AG04450 (cell line): ENCODE measurements at regions of chr22 and their contacts with region 1.

Region 1: DNA sequence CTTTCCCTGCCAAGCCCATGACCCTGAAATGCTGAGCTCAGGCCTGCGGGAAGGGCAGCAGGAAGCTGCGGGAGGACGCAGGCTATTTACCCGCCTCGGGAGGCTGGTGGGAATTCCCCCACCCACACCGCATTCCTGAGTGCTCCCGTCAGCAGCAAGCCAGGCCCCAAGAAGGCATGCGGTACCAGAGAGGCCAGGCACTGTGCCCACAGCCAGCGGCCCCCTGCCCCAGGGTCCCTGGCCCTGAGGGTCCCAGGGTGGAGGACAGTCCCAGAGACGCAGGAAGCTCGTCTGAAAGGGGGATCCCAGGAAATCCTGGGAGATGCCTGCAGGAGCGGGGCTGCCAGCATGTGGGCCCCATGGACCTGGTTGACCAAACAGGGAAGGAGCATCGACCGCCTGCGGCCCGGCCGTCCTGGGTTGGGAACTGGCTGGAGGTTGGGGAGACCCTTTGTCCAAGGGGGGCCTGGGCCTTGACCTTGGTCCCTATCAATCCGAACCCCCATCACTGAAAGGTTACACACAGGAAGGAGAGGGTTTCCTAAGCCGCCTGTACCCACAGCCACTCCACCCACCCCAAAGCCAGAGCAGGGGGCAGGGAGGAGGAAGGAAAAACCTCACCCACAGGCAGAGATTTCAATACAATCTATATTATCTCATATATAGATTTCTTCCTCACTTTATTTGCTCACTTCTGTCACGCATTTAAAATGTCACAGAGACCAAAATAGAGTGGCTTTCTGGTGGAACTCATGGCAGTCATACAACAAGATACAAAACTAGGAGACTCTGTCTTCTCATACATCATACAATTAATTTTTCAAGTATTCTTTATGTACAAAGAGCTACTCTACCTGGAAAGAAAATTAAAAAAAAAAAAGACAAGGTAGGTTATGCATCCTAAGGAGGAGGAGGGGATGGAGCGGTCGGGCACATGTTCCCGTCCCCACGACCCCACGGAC is 17.1 kb downstream of the MAFF start:
- DNase-seq: peak; percentile 91
- H3K4me3 ChIP-seq: no peak overlapping the region
- H3K27ac ChIP-seq: peak overlapping the region; percentile 98
- H3K27me3 ChIP-seq: no peaks in the 10 kb centered on the region
- CTCF ChIP-seq: no peak

Region 2: DNA sequence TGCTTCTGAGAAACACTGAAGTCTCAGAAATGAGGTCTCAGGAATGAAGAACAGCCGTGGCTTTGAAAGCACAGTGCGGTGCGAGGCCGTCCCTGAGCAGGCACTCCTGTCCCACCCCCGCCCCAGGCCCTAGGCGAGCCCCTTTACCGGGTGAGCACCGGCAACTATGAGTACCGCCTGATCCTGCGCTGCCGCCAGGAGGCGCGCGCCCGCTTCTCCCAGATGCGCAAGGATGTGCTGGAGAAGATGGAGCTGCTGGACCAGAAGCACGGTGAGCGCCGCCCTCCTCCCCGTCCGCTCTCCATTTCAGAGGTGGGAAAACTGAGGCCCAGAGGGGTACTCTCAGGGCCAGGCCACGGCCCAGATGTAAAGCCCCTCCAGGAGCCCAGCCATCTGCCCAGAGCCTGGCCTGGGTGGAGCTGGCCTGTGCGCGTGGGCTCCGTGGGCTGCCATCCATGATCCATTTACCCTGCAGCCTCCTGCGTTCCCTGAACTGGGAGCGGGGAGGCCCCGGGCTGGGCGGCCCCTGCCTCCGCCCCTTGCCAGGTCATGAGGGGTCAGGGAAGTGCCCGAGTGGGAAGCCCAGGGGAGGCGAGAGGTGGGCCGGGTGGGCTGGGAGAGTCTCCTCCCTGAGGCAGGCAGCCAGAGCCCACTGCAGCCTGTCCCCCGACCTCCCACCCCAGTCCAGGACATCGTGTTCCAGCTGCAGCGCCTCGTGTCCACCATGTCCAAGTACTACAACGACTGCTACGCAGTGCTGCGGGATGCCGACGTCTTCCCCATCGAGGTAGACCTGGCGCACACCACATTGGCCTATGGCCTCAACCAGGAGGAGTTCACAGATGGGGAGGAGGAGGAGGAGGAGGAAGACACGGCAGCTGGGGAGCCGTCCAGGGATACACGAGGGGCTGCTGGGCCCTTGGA is 144.5 kb before region 1 on chr22:
- CTCF ChIA-PET with region 1: interaction called, 10 read pairs
- POLR2A ChIA-PET with region 1: no interaction called
- DNase-seq: peak; percentile 10
- H3K4me3 ChIP-seq: no peak overlapping the region
- H3K27ac ChIP-seq: no peak overlapping the region
- H3K27me3 ChIP-seq: peaks cover under 1% of the 10 kb centered on the region
- CTCF ChIP-seq: peak; percentile 61

Region 3: DNA sequence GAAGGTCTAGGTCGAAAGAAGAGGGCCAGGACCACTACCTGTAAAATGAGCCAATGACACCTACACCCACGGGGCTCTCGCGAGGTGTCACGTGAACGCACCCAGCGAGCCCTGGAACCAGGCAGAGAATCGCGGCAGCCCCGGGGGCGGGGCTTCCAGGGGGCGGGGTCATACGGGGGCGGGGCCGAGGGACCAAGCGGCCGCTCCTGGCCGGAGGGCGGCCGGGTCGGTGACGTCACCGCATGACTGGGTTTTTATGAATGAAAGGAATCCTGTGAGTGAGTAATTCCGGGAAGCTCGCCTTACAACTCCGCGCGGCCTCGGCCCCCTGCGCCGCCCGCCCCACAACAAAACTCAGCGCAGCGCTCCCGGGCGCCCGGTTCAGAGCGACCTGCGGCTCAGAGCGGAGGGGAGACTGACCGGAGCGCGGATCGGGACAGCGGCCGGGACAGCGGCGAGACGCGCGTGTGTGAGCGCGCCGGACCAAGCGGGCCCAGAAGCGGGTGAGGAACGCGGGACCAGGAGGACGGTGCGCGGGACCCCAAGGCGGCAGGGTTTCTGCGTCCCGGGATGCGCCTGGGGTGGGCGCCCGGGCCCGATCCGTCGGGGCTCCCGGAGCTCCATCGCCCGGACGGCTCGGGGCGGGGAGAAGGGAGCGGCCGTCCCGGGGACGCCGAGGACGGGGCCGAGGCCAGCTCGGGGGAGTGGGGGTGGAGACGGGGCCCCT is 17.1 kb before region 1 on chr22 and contains the start of gene MAFF:
- CTCF ChIA-PET with region 1: interaction called, 3 read pairs
- POLR2A ChIA-PET with region 1: interaction called, 12 read pairs
- DNase-seq: peak; percentile 93
- H3K4me3 ChIP-seq: peak within 1 kb of the TSS; percentile 88
- H3K27ac ChIP-seq: peak within 1 kb of the TSS; percentile 95
- H3K27me3 ChIP-seq: no peaks in the 10 kb centered on the region
- CTCF ChIP-seq: no peak
- polyA plus RNA-seq, gene MAFF: 8.3 and 12.2 TPM in 2 replicates